ENCODE measurements at regions of chr6 and their contacts with region 1.

Region 1: GRCh38 chr6:3281631-3282475 is 23.1 kb downstream of the PSMG4 start:
- DNase-seq: peak; percentile 92
- H3K4me3 ChIP-seq: no peak overlapping the region
- H3K27ac ChIP-seq: no peak overlapping the region
- H3K4me1 ChIP-seq: peaks cover 15% of the 10 kb centered on the region
- H3K27me3 ChIP-seq: no peaks in the 10 kb centered on the region
- CTCF ChIP-seq: peak in 1 of 2 donors; percentile 7

Region 2: GRCh38 chr6:3403238-3404173 is 121.7 kb after region 1 on chr6:
- CTCF ChIA-PET with region 1: no interaction called
- dilution Hi-C with region 1: no loop called
- in situ Hi-C with region 1: no loop called
- intact Hi-C with region 1: loop called (anchors 2 kb)
- DNase-seq: peak; percentile 81
- H3K4me3 ChIP-seq: no peak overlapping the region
- H3K27ac ChIP-seq: peak overlapping the region; percentile 85
- H3K4me1 ChIP-seq: peaks cover 33% of the 10 kb centered on the region
- H3K27me3 ChIP-seq: no peaks in the 10 kb centered on the region
- CTCF ChIP-seq: no peak

Region 3: DNA sequence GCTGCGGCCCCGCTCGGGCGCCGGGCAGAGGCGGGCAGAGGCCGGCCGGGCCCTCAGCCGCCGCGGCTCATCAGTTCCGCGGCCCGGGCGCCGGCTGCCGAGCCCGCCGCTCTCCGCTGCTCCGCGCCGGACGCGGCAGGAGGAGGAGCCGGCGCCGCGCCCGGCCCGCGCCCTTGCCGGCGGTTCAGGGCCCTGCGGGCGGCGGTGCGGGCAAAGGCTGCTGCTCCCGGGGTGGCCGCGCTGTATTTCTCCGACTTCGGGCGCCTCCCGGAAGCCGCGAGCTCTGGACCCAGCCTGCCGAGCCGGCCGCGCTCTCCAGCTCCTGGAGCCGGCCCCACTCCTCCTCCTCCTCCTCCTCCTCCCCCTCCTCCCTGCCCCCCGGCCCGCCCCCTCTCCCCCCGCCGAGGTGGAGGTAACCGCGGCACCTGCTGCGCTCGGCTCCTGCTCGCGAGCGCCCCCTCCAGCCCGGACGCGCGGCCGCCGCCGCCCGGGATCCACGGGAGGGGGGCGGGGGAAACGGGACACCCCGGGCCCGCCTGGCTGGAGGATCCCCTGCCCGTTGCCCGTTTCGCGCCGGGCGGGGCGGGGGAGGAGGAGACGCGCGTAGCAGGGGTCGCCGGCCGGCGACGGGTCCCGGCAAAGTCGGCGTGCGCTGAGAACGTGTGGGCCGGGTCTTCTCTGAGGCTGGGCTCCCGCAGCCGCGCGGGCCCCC is 175.1 kb after region 1 on chr6 and contains the start of gene SLC22A23:
- CTCF ChIA-PET with region 1: no interaction called
- dilution Hi-C with region 1: no loop called
- in situ Hi-C with region 1: loop called in 1 of 2 experiments (anchors 5 kb)
- intact Hi-C with region 1: loop called (anchors 1 kb)
- DNase-seq: peak; percentile 60
- H3K4me3 ChIP-seq: peak within 1 kb of the TSS; percentile 82 to 93 (median 88)
- H3K27ac ChIP-seq: peak within 1 kb of the TSS; percentile 29
- H3K4me1 ChIP-seq: peaks cover 26% of the 10 kb centered on the region
- H3K27me3 ChIP-seq: no peaks in the 10 kb centered on the region
- CTCF ChIP-seq: peak; percentile 37 to 65
- total RNA-seq, gene SLC22A23: 34.0 to 49.3 TPM

Region 4: GRCh38 chr6:3721810-3722626 is 440.2 kb after region 1 on chr6:
- CTCF ChIA-PET with region 1: no interaction called
- dilution Hi-C with region 1: loop called (anchors 5 kb)
- in situ Hi-C with region 1: no loop called
- intact Hi-C with region 1: no loop called
- DNase-seq: no peak
- H3K4me3 ChIP-seq: no peak overlapping the region
- H3K27ac ChIP-seq: no peak overlapping the region
- H3K4me1 ChIP-seq: no peaks in the 10 kb centered on the region
- H3K27me3 ChIP-seq: no peaks in the 10 kb centered on the region
- CTCF ChIP-seq: no peak

Region 5: DNA sequence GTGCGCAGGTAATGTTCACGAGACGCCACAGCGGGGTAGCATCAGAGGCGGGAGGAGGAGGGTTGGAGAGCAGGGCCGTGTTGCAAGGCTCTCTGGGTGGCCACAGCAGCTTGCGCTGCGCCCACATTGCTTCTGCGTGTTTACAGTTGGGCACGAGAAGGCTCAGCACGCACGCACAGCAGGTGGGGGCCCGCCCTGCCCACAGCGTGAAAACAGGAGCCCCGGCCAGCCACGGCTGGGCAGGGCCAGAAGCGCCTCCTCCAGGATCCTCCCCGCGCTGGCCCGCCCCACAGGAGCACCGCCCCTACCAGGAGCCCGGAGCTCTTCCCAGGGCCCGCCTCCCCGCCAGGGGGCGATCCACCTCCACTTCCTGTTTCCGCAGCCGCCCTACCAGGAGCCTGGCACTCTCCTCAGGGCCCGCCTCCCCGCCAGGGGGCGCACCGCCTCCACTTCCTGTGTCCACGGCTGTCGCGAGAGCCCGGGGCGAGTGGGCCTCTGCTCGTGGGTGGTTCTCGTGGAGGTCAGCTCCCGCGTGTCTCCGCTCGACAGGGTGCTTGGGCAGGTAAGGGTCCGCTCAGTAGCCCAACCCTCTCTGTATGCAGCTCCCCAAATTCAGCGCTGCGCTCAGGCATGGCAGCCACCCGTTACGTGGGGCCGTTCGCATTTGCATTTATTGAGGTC is 567.2 kb after region 1 on chr6 and contains the start of gene FAM50B:
- CTCF ChIA-PET with region 1: no interaction called
- dilution Hi-C with region 1: no loop called
- in situ Hi-C with region 1: no loop called
- intact Hi-C with region 1: loop called (anchors 5 kb)
- DNase-seq: peak; percentile 81
- H3K4me3 ChIP-seq: peak within 1 kb of the TSS; percentile 44 to 62 (median 59)
- H3K27ac ChIP-seq: peak within 1 kb of the TSS; percentile 87
- H3K4me1 ChIP-seq: peaks cover 12% of the 10 kb centered on the region
- H3K27me3 ChIP-seq: no peaks in the 10 kb centered on the region
- CTCF ChIP-seq: peak; percentile 48 to 91
- total RNA-seq, gene FAM50B: 4.4 to 7.3 TPM

Region 6: DNA sequence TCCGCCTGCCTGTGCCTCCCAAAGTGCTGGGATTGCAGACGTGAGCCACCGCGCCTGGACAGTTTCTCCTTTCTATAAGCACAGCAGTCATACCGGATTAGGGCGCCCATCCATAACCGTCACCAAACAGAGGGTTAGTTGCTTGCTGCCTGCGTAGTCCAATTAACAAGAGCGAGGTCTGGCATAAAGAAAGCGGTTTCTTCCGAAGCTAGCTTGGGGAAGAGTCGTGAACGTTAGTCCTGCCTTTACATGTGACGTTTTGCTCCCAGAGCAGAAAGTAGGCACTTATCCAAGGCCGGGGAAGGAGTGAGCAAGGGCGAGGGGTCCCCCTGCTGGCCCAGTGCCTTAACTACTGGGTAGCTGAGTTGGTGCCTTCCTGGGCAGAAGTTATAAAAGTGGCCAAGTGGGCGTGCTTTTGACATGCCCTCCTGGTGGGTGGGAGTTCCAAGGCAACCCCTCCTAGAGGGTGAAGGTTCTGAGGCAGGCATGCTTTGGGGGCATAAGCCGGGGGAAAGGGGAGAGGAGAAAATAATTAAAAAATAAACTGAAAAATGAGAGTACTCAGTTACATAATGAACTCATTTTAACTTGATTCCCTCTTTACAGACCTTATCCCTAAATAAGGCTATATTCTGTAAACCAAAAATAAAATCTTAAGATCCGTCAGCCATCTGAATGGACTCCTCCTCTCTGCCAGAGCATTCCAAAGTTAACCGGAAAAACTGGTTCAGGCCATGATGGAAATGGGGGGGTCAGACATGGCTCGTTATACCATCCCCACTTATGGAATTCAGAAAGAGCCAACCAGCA is 709.0 kb after region 1 on chr6:
- CTCF ChIA-PET with region 1: no interaction called
- dilution Hi-C with region 1: loop called (anchors 25 kb)
- in situ Hi-C with region 1: no loop called
- intact Hi-C with region 1: loop called (anchors 1 kb)
- DNase-seq: peak; percentile 77
- H3K4me3 ChIP-seq: peak overlapping the region; percentile 27 to 42 (median 41)
- H3K27ac ChIP-seq: peak overlapping the region; percentile 42
- H3K4me1 ChIP-seq: peaks cover 13% of the 10 kb centered on the region
- H3K27me3 ChIP-seq: no peaks in the 10 kb centered on the region
- CTCF ChIP-seq: peak; percentile 90 to 97

Region 7: GRCh38 chr6:4018172-4018905 is 736.5 kb after region 1 on chr6:
- CTCF ChIA-PET with region 1: no interaction called
- dilution Hi-C with region 1: no loop called
- in situ Hi-C with region 1: loop called in 1 of 2 experiments (anchors 25 kb)
- intact Hi-C with region 1: no loop called
- DNase-seq: peak; percentile 96
- H3K4me3 ChIP-seq: peak overlapping the region; percentile 57 to 98 (median 73)
- H3K27ac ChIP-seq: peak overlapping the region; percentile 78
- H3K4me1 ChIP-seq: peaks cover 15% of the 10 kb centered on the region
- H3K27me3 ChIP-seq: no peaks in the 10 kb centered on the region
- CTCF ChIP-seq: peak; percentile 22 to 59